Activated T-helper 2 cell treated with anti-CD3 and anti-CD28 coated beads, Interferon-gamma antibody, Interleukin-2, Interleukin-4, amounts not matched to agents 10 μg/mL and 5 μg/mL and 100 μg/mL, durations not matched to agents 14 hours and 24 hours and 36 hours (primary cell): ENCODE measurements at regions of chr6 and their contacts with region 1.

Region 1: DNA sequence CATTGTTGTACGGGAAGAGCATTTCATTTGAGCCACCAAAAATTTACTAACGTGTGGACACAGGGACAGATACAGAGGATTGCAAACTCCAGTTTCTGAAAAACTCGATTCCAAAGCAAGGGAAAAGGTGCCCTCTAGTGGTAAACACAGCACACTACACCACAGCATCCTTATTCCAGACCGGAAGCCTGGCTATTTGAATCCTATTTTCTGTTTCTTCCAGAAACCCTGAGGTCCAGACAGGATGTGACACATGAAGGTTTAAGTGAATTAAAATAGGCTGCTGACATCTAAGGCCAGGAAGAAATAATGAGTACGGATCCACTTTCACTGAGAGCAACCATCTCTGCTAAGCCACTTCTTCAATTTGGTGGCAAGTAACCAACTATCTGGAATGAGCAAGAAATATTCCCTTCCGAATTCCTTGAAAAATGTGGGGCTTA is 31.8 kb upstream of the GMPR start:
- DNase-seq: peak; percentile 23
- H3K4me3 Mint-ChIP-seq: no peak overlapping the region
- H3K27ac Mint-ChIP-seq: no peak overlapping the region
- H3K4me1 Mint-ChIP-seq: peaks cover 10% of the 10 kb centered on the region
- H3K27me3 Mint-ChIP-seq: peaks cover 28% of the 10 kb centered on the region

Region 2: DNA sequence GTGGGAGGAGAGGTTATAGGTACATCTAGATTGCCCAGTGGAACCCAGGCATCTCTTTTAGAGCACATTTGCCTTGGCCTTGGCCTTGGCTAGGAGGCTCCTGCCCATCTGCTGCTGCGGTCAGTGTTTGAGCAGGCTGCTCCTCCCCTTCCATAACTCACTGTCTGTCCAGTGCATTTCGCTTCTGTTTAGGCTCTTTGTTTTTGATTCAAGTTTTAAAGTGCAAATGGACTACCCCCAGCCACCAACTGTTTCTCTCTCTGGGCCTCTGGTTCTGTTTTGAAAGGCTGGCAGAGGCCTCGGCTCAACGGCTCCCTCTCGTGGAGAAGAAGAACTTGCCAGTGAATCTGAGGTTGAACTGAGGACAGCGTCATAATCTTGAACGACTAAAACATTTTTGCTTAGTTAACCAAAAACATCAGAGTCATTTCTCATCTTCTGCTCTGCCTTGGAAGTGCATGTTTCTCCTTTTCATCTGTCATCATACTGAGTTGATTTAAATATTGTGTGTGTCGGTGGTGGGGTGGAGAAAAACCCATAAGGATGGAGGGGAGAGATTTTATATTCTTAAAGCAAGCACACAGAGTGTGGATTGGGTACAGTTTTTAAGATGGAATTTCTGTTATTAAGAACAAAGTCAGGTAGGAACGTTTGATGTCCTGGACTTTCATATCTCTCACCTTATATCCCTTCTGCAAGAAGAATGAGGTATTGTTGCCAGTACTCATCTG is 715.2 kb before region 1 on chr6:
- intact Hi-C with region 1: loop called (anchors 10 kb)
- DNase-seq: peak; percentile 60
- H3K4me3 Mint-ChIP-seq: no peak overlapping the region
- H3K27ac Mint-ChIP-seq: peak overlapping the region; percentile 62
- H3K4me1 Mint-ChIP-seq: peaks cover 35% of the 10 kb centered on the region
- H3K27me3 Mint-ChIP-seq: no peaks in the 10 kb centered on the region

Region 3: DNA sequence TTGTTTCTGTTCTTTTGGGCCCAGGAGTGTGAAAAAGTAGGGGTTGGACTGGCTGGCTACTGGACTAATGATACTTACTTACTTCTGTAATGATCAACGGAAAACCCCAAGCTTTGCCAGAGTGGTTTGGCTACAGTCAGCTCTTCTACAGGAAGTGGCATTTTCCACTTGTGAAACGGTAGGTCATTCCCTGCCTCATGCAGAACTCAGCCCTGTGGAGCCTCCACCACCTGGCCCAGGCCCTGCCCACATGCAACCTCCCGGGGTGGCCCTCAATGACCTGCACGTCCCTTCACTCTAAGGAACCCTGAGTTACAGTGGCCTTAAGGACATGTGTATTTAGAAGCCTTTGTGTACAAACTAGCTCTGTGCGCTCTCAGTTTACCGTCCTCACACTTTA is 684.2 kb before region 1 on chr6:
- intact Hi-C with region 1: loop called (anchors 10 kb)
- DNase-seq: no peak
- H3K4me3 Mint-ChIP-seq: no peak overlapping the region
- H3K27ac Mint-ChIP-seq: peak overlapping the region; percentile 28
- H3K4me1 Mint-ChIP-seq: peaks cover 12% of the 10 kb centered on the region
- H3K27me3 Mint-ChIP-seq: no peaks in the 10 kb centered on the region